OCI-LY7 (cell line): ENCODE measurements at regions of chr18 and their contacts with region 1.

Region 1: GRCh38 chr18:74551936-74552555 is 17.7 kb downstream of the CNDP1 start:
- DNase-seq: peak; percentile 68
- H3K4me3 ChIP-seq: no peak overlapping the region
- H3K27ac ChIP-seq: no peak overlapping the region
- H3K4me1 ChIP-seq: no peaks in the 10 kb centered on the region
- CTCF ChIP-seq: peak; percentile 78

Region 2: GRCh38 chr18:74196220-74197119 is 355.6 kb before region 1 on chr18:
- CTCF ChIA-PET with region 1: no interaction called
- POLR2A ChIA-PET with region 1: no interaction called
- intact Hi-C with region 1: loop called (anchors 1 kb)
- DNase-seq: peak; percentile 64
- H3K4me3 ChIP-seq: peak overlapping the region; percentile 50
- H3K27ac ChIP-seq: no peak overlapping the region
- H3K4me1 ChIP-seq: peaks cover 14% of the 10 kb centered on the region
- CTCF ChIP-seq: peak; percentile 88

Region 3: GRCh38 chr18:74353169-74353775 is 198.8 kb before region 1 on chr18:
- CTCF ChIA-PET with region 1: no interaction called
- POLR2A ChIA-PET with region 1: no interaction called
- intact Hi-C with region 1: loop called (anchors 5 kb)
- DNase-seq: peak; percentile 12
- H3K4me3 ChIP-seq: no peak overlapping the region
- H3K27ac ChIP-seq: no peak overlapping the region
- H3K4me1 ChIP-seq: no peaks in the 10 kb centered on the region
- CTCF ChIP-seq: peak; percentile 52

Region 4: GRCh38 chr18:74450626-74451025 is 101.4 kb before region 1 on chr18:
- CTCF ChIA-PET with region 1: no interaction called
- POLR2A ChIA-PET with region 1: no interaction called
- intact Hi-C with region 1: no loop called
- DNase-seq: no peak
- H3K4me3 ChIP-seq: no peak overlapping the region
- H3K27ac ChIP-seq: no peak overlapping the region
- H3K4me1 ChIP-seq: no peaks in the 10 kb centered on the region
- CTCF ChIP-seq: no peak

Region 5: DNA sequence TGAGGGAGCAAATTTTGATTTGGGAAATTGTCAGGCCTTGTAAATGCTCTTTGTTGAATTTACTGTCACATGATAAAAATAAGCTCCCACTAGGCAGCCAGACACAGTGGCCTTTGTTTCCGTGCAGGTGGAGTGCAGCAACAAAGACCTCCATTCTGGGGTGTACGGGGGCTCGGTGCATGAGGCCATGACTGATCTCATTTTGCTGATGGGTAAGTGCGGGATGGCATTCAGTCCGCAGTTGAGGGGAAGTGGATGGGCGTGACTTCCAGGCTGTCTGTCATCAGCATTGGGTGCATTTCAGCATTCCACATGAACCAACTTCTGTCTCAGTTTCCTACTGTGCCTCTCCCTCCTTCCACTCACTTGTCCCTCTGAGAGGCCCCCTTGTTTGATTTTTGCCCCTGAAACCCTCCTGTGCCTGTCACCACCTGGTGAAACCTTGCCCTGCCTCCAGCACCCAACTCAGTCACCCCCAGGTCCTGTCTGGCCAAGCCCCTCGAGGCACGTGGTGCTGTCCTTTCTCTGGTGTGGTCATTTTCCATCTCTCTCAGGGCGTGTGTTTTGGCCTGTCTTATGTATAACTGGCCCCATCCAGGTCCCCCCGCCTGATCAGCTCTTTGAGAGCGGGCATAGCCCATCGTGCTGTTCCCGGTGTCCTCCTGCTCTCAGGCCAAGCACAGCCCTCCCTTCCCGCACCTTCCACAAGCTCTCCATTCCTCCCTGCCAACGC is 39.6 kb before region 1 on chr18:
- CTCF ChIA-PET with region 1: no interaction called
- POLR2A ChIA-PET with region 1: no interaction called
- intact Hi-C with region 1: no loop called
- DNase-seq: no peak
- H3K4me3 ChIP-seq: no peak overlapping the region
- H3K27ac ChIP-seq: no peak overlapping the region
- H3K4me1 ChIP-seq: no peaks in the 10 kb centered on the region
- CTCF ChIP-seq: no peak

Region 6: GRCh38 chr18:74768096-74768495 is 216.1 kb after region 1 on chr18:
- CTCF ChIA-PET with region 1: no interaction called
- POLR2A ChIA-PET with region 1: no interaction called
- intact Hi-C with region 1: no loop called
- DNase-seq: no peak
- H3K4me3 ChIP-seq: no peak overlapping the region
- H3K27ac ChIP-seq: no peak overlapping the region
- H3K4me1 ChIP-seq: no peaks in the 10 kb centered on the region
- CTCF ChIP-seq: no peak